AG04450 (cell line): ENCODE measurements at regions of chr2 and their contacts with region 1.

Region 1: DNA sequence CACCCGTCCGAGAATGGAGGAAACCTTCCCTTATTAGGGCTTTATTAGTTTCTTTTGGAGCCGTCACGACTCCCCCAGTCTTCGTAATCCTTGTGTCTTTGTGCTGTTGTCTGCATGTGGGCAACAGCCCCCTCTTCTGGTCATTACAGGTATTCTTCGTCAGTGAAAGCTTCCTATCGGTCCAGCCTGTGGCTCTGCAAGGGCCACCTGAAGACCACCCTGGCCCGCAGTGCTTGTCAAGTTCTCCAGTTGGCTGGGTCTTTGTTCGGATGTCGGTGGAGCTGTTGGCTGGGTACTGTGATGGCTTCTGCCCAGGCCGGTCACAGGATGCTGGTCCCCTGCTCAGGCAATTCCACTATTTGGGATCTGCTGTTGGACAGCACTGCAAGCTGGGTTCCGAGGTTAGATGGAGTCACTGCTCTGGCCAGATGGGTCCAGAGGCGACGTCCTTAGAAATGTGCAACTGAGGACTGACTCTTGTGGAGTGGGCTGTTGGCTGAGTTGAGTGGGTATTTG is 19.2 kb downstream of the E2F6 start:
- DNase-seq: peak; percentile 33
- H3K4me3 ChIP-seq: no peak overlapping the region
- H3K27ac ChIP-seq: no peak overlapping the region
- H3K27me3 ChIP-seq: no peaks in the 10 kb centered on the region
- CTCF ChIP-seq: peak; percentile 79

Region 2: GRCh38 chr2:11234309-11234708 is 212.5 kb before region 1 on chr2:
- CTCF ChIA-PET with region 1: interaction called, 18 read pairs
- POLR2A ChIA-PET with region 1: no interaction called
- DNase-seq: no peak
- H3K4me3 ChIP-seq: no peak overlapping the region
- H3K27ac ChIP-seq: no peak overlapping the region
- H3K27me3 ChIP-seq: no peaks in the 10 kb centered on the region
- CTCF ChIP-seq: peak; percentile 51

Region 3: DNA sequence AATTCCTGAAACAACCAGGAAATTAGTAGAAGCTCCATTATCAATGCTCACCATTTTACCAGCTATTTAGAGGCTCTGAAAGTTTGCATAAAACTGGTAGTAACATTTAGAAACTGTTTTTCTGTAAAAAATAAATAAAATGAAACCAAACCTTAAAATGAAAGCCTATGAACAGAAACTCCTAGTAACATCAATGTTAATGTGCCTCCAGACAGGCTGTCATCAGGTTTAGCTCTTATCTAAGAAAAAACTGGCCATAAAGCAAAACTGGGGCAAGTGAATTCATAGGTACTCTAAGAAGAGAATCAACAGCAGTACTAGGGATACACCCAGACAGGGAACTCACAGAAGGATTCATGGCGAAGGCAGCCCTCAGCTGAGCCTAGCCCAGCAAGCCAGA is 11.1 kb after region 1 on chr2:
- CTCF ChIA-PET with region 1: interaction called, 10 read pairs
- POLR2A ChIA-PET with region 1: interaction called, 5 read pairs
- DNase-seq: no peak
- H3K4me3 ChIP-seq: no peak overlapping the region
- H3K27ac ChIP-seq: no peak overlapping the region
- H3K27me3 ChIP-seq: no peaks in the 10 kb centered on the region
- CTCF ChIP-seq: no peak

Region 4: DNA sequence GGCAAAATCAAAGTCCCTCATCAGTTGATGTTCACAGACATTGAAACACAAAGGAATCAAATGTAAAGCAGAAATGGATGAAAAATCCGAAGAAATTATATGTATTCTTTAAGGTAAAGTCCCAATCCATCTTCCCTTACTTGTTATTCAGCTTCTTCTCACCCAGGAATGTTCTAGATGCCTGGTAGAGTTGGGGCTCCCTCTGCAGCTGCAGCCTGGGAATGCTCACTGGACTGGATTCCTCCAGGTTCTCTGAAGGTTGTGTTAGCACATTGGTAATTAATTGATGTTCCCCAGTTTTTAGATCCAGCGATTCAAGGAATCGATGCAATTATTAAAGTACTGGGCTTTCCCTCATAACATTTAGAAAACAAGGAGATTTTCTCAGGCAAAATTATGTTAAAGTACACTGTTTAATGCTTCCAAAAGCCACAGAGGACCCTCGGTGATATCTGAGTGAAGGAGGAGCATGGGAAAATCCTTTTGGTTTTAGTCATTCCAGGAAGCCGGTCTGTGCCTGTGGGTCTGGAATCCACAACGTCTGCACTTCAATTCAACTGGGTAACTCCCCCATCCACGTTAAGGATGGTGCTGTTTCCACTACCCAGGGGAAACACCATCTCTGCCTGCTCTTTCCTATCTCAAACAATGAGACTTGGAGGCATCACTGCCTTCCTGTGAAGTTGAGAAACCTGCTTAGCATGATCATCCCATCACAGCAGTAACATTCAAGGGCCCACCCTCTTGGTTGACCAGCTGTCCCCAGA is 201.2 kb after region 1 on chr2:
- CTCF ChIA-PET with region 1: no interaction called
- POLR2A ChIA-PET with region 1: no interaction called
- DNase-seq: no peak
- H3K4me3 ChIP-seq: no peak overlapping the region
- H3K27ac ChIP-seq: no peak overlapping the region
- H3K27me3 ChIP-seq: peaks cover 29% of the 10 kb centered on the region
- CTCF ChIP-seq: peak; percentile 47